CD4-positive, alpha-beta T cell (primary cell): ENCODE measurements at regions of chr11 and their contacts with region 1.

Region 1: DNA sequence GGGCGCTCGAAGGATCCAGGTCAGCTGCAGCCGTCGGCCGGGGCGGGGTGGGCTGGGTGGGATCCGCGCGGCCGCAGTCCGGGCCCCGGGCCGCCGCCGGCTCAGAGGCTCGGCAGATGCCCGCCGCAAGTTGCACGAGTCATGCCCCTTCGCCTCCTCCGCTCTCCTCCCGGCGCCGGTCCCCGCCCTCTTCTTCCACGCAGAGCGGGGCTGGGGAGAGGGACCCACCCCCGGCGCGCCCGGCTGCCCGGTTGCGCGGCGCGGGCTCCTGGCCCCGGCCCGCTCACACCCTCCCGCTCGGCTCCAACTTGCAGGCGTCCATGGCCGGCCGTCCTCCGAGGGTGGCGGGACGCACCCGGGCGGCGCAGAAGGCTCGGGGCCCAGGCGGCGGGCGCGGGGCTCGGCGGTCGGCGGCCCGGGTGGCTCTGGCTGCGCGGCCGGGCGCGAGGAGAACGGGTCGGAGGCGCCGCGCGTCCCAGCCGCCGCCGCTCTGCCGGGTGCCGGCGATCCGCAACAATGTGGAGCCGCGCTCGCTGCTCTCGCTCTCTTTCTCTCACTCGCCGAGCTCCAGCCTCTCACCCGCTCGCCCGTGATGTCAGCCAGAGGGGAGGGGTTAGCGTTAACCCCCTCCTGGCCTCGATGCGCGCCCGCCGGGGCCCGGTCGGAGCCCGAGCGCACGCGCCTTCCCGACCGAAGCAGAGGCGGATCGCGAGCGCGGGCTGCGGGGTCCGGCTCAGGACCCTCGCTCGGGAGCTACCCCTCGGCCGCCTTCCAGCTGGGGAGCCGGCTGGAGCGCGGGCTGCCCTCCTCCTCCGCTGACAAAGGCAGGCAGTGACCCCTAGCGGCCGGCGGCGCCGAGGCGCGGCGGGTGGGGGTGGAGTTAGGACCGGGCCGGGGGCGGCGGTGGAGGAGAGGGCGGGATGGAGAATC is at the start of gene NECTIN1:
- DNase-seq: peak; percentile 64 to 92 (median 81)
- ATAC-seq: peak; percentile 83
- H3K4me3 ChIP-seq: peak within 1 kb of the TSS; percentile 61
- H3K4me3 Mint-ChIP-seq: peak within 1 kb of the TSS; percentile 99
- H3K27ac ChIP-seq: no peak within 1 kb of the TSS
- H3K27ac Mint-ChIP-seq: peak within 1 kb of the TSS; percentile 83
- H3K4me1 ChIP-seq: peaks cover 25% of the 10 kb centered on the region
- H3K4me1 Mint-ChIP-seq: peaks cover 5% of the 10 kb centered on the region
- H3K27me3 ChIP-seq: peaks cover 13 to 27% of the 10 kb centered on the region in 2 experiments
- H3K27me3 Mint-ChIP-seq: peaks cover 26% of the 10 kb centered on the region
- CTCF ChIP-seq: peak; percentile 91
- total RNA-seq, gene NECTIN1: 2.5 to 3.4 TPM

Region 2: GRCh38 chr11:119381181-119381988 is 347.5 kb before region 1 on chr11 and contains the start of gene USP2:
- CTCF ChIA-PET with region 1: no interaction called
- POLR2A ChIA-PET with region 1: no interaction called
- intact Hi-C with region 1: loop called in 1 of 2 experiments (anchors 10 kb)
- DNase-seq: peak; percentile 90 to 98 (median 96)
- ATAC-seq: peak; percentile 95
- H3K4me3 ChIP-seq: peak within 1 kb of the TSS; percentile 71
- H3K4me3 Mint-ChIP-seq: peak within 1 kb of the TSS; percentile 36
- H3K27ac ChIP-seq: peak within 1 kb of the TSS in 1 of 2 donors; percentile 34
- H3K27ac Mint-ChIP-seq: no peak within 1 kb of the TSS
- H3K4me1 ChIP-seq: peaks cover 26% of the 10 kb centered on the region
- H3K4me1 Mint-ChIP-seq: no peaks in the 10 kb centered on the region
- H3K27me3 ChIP-seq: peaks cover 0 to 5% of the 10 kb centered on the region in 2 experiments
- H3K27me3 Mint-ChIP-seq: no peaks in the 10 kb centered on the region
- CTCF ChIP-seq: peak; percentile 94
- total RNA-seq, gene USP2: 2.0 to 2.6 TPM

Region 3: GRCh38 chr11:119481021-119481666 is 247.8 kb before region 1 on chr11:
- CTCF ChIA-PET with region 1: no interaction called
- POLR2A ChIA-PET with region 1: no interaction called
- intact Hi-C with region 1: loop called in 1 of 2 experiments (anchors 5 kb)
- DNase-seq: peak; percentile 37 to 76 (median 57)
- ATAC-seq: peak; percentile 65
- H3K4me3 ChIP-seq: no peak overlapping the region
- H3K4me3 Mint-ChIP-seq: no peak overlapping the region
- H3K27ac ChIP-seq: no peak overlapping the region
- H3K27ac Mint-ChIP-seq: no peak overlapping the region
- H3K4me1 ChIP-seq: peaks cover 3% of the 10 kb centered on the region
- H3K4me1 Mint-ChIP-seq: no peaks in the 10 kb centered on the region
- H3K27me3 ChIP-seq: peaks cover 3 to 4% of the 10 kb centered on the region in 2 experiments
- H3K27me3 Mint-ChIP-seq: peaks cover 43% of the 10 kb centered on the region
- CTCF ChIP-seq: peak; percentile 71

Region 4: GRCh38 chr11:119641983-119642745 is 86.8 kb before region 1 on chr11:
- CTCF ChIA-PET with region 1: interaction called, 9 read pairs
- POLR2A ChIA-PET with region 1: no interaction called
- intact Hi-C with region 1: loop called in 1 of 2 experiments (anchors 5 kb)
- DNase-seq: peak in 4 of 14 experiments; percentile 14 to 59 (median 46)
- ATAC-seq: no peak
- H3K4me3 ChIP-seq: no peak overlapping the region
- H3K4me3 Mint-ChIP-seq: no peak overlapping the region
- H3K27ac ChIP-seq: no peak overlapping the region
- H3K27ac Mint-ChIP-seq: no peak overlapping the region
- H3K4me1 ChIP-seq: no peaks in the 10 kb centered on the region
- H3K4me1 Mint-ChIP-seq: no peaks in the 10 kb centered on the region
- H3K27me3 ChIP-seq: peaks cover 0 to 6% of the 10 kb centered on the region in 2 experiments
- H3K27me3 Mint-ChIP-seq: no peaks in the 10 kb centered on the region
- CTCF ChIP-seq: peak; percentile 55

Region 5: GRCh38 chr11:119854521-119854920 is 125.6 kb after region 1 on chr11:
- CTCF ChIA-PET with region 1: no interaction called
- POLR2A ChIA-PET with region 1: no interaction called
- intact Hi-C with region 1: no loop called
- DNase-seq: no peak
- ATAC-seq: no peak
- H3K4me3 ChIP-seq: no peak overlapping the region
- H3K4me3 Mint-ChIP-seq: no peak overlapping the region
- H3K27ac ChIP-seq: no peak overlapping the region
- H3K27ac Mint-ChIP-seq: no peak overlapping the region
- H3K4me1 ChIP-seq: no peaks in the 10 kb centered on the region
- H3K4me1 Mint-ChIP-seq: no peaks in the 10 kb centered on the region
- H3K27me3 ChIP-seq: peaks cover 0 to 6% of the 10 kb centered on the region in 2 experiments
- H3K27me3 Mint-ChIP-seq: peaks cover 40% of the 10 kb centered on the region
- CTCF ChIP-seq: no peak

Region 6: GRCh38 chr11:120210626-120211521 is 482.0 kb after region 1 on chr11 and contains the start of gene OAF:
- CTCF ChIA-PET with region 1: interaction called, 3 read pairs
- POLR2A ChIA-PET with region 1: no interaction called
- intact Hi-C with region 1: loop called in 1 of 2 experiments (anchors 2 kb)
- DNase-seq: peak; percentile 16 to 79 (median 46)
- ATAC-seq: peak; percentile 88
- H3K4me3 ChIP-seq: peak within 1 kb of the TSS; percentile 63
- H3K4me3 Mint-ChIP-seq: peak within 1 kb of the TSS; percentile 99
- H3K27ac ChIP-seq: no peak within 1 kb of the TSS
- H3K27ac Mint-ChIP-seq: peak within 1 kb of the TSS; percentile 61
- H3K4me1 ChIP-seq: peaks cover 23% of the 10 kb centered on the region
- H3K4me1 Mint-ChIP-seq: peaks cover 25% of the 10 kb centered on the region
- H3K27me3 ChIP-seq: peaks cover 7% of the 10 kb centered on the region in 2 experiments
- H3K27me3 Mint-ChIP-seq: peaks cover 31% of the 10 kb centered on the region
- CTCF ChIP-seq: no peak
- total RNA-seq, gene OAF: 3.1 to 3.2 TPM